T-cell (primary cell): ENCODE measurements at regions of chr17 and their contacts with region 1.

Region 1: DNA sequence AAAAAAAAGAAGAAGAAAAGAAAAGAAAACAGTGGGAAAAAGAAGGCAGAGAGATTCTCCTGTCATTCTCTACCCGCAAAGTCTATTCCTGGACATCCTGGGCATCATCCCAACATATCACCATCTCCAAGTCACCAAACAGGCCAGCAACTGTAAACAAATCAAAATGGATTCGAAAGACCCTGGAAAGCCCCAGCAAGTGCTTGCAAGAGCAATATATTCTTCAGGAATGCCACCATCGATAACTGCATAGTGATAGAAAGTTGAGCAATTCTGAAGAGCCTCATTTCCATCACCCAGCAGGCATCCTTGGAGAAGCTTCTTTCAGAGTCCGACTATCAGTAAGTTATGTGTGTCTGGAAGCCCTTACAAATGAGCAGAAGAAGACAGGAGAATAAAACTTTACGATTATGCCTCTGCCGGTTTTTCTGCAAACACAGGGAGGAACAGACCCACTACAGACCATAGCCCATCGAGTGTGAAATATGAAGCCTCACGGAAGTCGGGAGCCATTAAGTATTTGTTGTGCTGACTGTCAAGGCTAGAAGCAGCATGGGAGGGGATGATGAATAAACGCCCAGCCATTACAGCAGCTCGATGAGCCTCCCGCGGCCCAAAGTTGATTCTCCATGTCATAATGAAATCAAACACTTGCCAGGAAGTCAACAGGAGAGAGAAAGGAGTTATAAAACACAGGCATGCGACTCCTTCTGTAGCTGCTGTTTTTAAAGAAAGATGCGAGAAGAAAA is 64.5 kb upstream of the SEC14L1 start:
- DNase-seq: no peak
- ATAC-seq: no peak
- H3K4me3 ChIP-seq: no peak overlapping the region
- H3K4me3 Mint-ChIP-seq: no peak overlapping the region
- H3K27ac ChIP-seq: no peak overlapping the region
- H3K27ac Mint-ChIP-seq: no peak overlapping the region
- H3K4me1 ChIP-seq: no peaks in the 10 kb centered on the region
- H3K4me1 Mint-ChIP-seq: peaks cover 0 to 5% (median 0%) of the 10 kb centered on the region in 3 donors
- H3K27me3 ChIP-seq: peaks cover 0 to 40% of the 10 kb centered on the region in 2 experiments
- H3K27me3 Mint-ChIP-seq: peaks cover 23 to 45% of the 10 kb centered on the region in 2 donors

Region 2: DNA sequence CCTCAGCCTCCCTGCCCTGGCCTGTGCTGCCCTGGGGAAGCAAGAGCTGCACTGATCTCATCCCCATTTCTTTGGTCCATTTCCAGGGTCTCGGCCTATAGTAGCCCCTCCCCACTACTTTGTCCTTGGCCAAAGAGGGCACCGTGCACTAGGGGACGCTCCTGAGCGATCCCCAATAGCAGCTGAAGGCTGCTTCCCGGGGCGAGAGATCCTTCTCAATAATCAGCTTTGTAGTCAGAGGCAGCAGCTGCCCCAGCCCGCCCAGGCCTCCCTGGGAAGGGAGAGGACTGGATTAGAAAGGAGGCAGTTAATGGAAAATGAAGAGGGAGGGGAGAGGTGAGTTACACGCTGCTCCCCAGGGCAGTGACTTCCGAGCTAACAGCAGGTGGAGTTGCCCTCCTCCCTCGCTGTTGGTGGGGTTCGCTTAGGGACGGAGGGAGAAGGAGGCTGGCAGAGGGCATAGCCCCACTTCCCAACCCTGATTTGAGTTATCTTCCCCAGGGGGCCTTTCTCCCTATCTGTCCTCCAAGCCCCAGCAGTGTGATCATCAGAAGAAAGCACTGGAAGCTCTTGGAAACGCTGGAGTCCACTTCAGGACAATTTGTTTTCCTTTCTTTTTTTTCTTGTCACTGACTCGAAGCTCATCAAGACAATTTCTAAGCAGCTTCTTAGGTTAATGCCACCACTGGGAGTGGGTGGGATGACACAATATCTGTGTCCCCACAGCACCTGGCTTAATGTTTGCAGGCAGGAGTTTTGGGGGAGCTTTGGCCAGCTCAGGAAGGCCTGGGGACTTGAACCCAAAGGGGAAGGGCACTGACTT is 368.1 kb before region 1 on chr17:
- CTCF ChIA-PET with region 1: interaction called in 1 of 2 experiments, 11 read pairs
- POLR2A ChIA-PET with region 1: no interaction called
- DNase-seq: no peak
- ATAC-seq: no peak
- H3K4me3 ChIP-seq: no peak overlapping the region
- H3K4me3 Mint-ChIP-seq: peak overlapping the region in 1 of 3 donors; percentile 70
- H3K27ac ChIP-seq: no peak overlapping the region
- H3K27ac Mint-ChIP-seq: no peak overlapping the region
- H3K4me1 ChIP-seq: peaks cover 0 to 27% of the 10 kb centered on the region in 2 experiments
- H3K4me1 Mint-ChIP-seq: peaks cover 3 to 21% (median 15%) of the 10 kb centered on the region in 3 donors
- H3K27me3 ChIP-seq: peaks cover 0 to 9% of the 10 kb centered on the region in 2 experiments
- H3K27me3 Mint-ChIP-seq: no peaks in the 10 kb centered on the region

Region 3: GRCh38 chr17:77164483-77165091 is 88.3 kb after region 1 on chr17:
- CTCF ChIA-PET with region 1: no interaction called
- POLR2A ChIA-PET with region 1: no interaction called
- DNase-seq: no peak
- ATAC-seq: peak in 1 of 4 experiments; percentile 30
- H3K4me3 ChIP-seq: no peak overlapping the region
- H3K4me3 Mint-ChIP-seq: peak overlapping the region in 1 of 3 donors; percentile 28
- H3K27ac ChIP-seq: no peak overlapping the region
- H3K27ac Mint-ChIP-seq: peak overlapping the region; percentile 65 to 90
- H3K4me1 ChIP-seq: peaks cover 9 to 18% of the 10 kb centered on the region in 2 experiments
- H3K4me1 Mint-ChIP-seq: peaks cover 52 to 56% (median 53%) of the 10 kb centered on the region in 3 donors
- H3K27me3 ChIP-seq: no peaks in the 10 kb centered on the region
- H3K27me3 Mint-ChIP-seq: no peaks in the 10 kb centered on the region